ENCODE measurements at regions of chr15 and their contacts with region 1.

Region 1: GRCh38 chr15:41774062-41774881 is at the start of gene MAPKBP1:
- DNase-seq: peak; percentile 82
- H3K4me3 ChIP-seq: peak within 1 kb of the TSS; percentile 50 to 82 (median 76)
- H3K27ac ChIP-seq: peak within 1 kb of the TSS; percentile 87 to 95 (median 90)
- H3K4me1 ChIP-seq: peaks cover 32 to 62% (median 45%) of the 10 kb centered on the region in 3 donors
- H3K27me3 ChIP-seq: no peaks in the 10 kb centered on the region
- CTCF ChIP-seq: peak; percentile 49 to 72 (median 58)
- POLR2A ChIP-seq: peak in 2 of 4 donors; percentile 24 to 79
- total RNA-seq, gene MAPKBP1: 18.4 to 37.6 (median 29.8) TPM

Region 2: GRCh38 chr15:41811432-41812195 is 37.3 kb after region 1 on chr15:
- intact Hi-C with region 1: loop called (anchors 2 kb)
- DNase-seq: peak; percentile 14
- H3K4me3 ChIP-seq: no peak overlapping the region
- H3K27ac ChIP-seq: peak overlapping the region in 1 of 4 donors; percentile 54
- H3K4me1 ChIP-seq: peaks cover 5 to 43% (median 18%) of the 10 kb centered on the region in 3 donors
- H3K27me3 ChIP-seq: no peaks in the 10 kb centered on the region
- CTCF ChIP-seq: peak; percentile 80 to 94 (median 90)
- POLR2A ChIP-seq: no peak

Region 3: DNA sequence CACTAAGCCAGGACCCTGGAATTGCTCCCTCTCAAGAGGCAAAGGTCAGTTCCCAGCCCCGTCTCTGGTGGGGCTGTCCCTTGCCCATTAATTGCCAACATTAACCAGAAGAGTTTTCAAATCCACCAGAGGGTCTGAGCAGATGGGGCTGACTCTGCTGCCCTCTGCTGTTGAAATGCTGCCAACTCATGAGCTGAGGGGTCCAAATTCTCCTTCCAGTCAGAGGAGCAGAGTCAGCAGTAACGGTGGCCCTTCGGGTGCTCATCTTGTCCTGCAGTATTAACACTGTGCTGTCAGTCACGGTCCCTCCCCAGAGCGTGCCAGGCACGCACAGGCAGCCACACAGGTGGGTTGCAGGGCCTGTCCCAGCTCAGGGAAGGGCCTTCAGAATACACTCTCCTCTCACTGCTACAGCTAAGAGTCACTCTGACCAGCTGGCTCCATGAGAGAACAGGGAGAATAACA is 130.3 kb after region 1 on chr15:
- intact Hi-C with region 1: loop called (anchors 5 kb)
- DNase-seq: no peak
- H3K4me3 ChIP-seq: no peak overlapping the region
- H3K27ac ChIP-seq: peak overlapping the region in 1 of 4 donors; percentile 14
- H3K4me1 ChIP-seq: peaks cover 0 to 14% (median 0%) of the 10 kb centered on the region in 3 donors
- H3K27me3 ChIP-seq: no peaks in the 10 kb centered on the region
- CTCF ChIP-seq: peak; percentile 57 to 80 (median 75)
- POLR2A ChIP-seq: no peak

Measured in esophagus squamous epithelium (tissue), 5 donors.